ENCODE measurements at regions of chr5 and their contacts with region 1.

Region 1: GRCh38 chr5:55172051-55172899 is 702 bp downstream of the CDC20B start:
- DNase-seq: peak; percentile 19 to 44
- ATAC-seq: peak; percentile 62

Region 2: DNA sequence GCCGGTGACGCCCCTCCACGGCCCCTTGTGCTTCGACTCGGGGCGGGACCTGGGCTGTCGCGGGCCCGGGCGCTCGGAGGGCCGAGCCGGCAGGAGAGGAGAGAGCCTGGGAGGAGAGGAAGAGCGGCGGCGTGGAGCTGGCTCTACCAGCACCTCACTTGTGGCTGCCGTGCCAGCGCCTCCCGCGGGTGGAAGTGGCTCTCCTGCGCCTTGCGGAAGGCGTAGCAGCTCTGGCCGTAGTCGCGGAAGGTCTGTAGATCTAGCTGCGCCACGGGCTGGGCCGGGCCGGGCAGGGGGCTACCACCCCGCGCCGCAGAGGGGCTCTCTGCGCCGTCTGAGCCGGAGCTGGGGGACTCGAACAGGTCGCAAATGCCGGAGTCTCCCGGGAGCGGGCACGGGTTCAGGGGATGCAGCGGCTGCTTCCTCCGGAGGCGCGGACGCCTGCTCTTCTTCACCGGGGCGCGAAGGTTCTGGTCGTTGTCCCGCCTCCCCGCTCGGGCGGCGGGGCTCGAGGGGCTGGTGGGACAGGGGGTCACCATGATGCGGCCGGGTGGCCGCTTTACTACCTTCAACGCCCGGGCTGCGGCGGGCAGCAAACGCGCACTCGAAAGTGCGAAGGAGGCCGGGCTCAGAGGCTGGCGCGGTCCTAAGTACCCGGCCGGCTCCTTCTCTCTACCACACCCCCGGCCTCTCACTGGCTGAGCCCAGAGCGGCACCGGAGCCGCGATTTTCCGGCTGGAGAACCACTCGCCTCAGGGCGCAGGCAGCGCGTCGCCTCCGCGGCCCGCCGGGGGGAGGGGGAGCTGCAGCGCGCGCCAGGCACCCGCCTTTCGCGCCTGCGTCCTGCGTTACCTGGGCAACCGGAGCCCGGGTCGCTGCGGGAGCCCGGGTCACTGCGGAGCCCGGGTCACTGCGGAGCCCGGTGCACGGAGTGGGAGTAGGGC is 61.0 kb after region 1 on chr5 and contains the start of gene CCNO:
- intact Hi-C with region 1: loop called in 1 of 2 experiments (anchors 10 kb)
- DNase-seq: peak; percentile 75 to 78
- ATAC-seq: peak; percentile 80
- total RNA-seq, gene CCNO: 1.4 to 3.0 TPM

Region 3: DNA sequence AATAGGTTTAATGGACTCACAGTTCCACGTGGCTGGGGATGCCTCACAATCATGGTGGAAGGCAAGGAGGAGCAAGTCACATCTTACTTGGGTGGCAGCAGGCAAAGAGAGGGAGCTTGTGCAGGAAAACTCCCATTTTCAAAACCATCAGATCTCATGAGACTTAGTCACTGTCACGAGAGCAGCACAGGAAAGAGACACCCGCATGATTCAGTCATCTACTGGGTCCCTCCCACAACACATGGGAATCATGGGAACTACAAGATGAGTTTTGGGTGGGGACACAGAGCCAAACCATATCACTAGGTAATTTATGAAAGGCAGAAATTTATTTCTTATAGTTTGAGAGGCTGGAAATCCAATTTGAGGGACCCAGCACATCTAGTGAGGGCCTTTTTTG is 175.5 kb after region 1 on chr5:
- intact Hi-C with region 1: no loop called
- DNase-seq: no peak
- ATAC-seq: no peak